Left cardiac atrium (tissue), 4 donors: ENCODE measurements at regions of chr5 and their contacts with region 1.

Region 1: GRCh38 chr5:150656191-150657132 is 4.6 kb upstream of the MYOZ3 start:
- DNase-seq: peak; percentile 76
- ATAC-seq: peak; percentile 61 to 80

Region 2: GRCh38 chr5:150398722-150399523 is 257.5 kb before region 1 on chr5:
- intact Hi-C with region 1: no loop called
- DNase-seq: no peak
- ATAC-seq: no peak

Region 3: DNA sequence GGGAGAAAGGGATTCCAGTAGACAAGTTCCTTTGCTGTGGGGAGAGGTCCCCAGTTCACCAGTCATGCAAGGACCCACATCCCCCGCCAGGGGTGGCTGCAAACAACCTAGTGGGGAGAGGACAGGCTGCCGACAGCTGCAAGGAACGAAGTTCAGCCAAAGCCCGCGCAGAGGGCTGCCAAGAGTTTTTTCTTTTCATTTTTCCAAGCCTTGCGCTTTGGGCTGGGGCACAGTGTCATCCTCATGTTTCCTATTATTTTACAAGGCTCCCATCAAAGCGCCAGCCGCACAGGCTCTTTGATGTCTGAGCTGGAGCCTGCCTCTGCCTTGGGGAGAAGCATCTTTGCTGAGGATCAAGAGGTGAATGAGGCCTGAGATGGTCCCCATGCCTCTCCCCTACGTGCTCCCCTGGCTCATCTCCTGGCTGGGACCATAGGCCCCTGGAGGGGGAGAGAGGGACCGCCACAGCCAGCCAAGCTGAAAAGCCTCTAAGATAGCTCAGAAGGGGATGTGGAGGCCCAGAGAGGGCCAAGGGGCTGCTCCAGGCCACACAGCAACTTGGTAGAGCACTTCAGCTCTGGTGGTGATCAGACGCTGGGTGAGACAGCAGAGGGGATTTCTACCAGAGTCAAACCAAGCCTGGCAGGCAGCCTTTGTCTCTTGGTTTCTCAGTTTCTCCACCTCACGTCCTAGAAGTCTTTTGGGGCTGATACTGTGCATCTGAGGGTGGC is 66.4 kb before region 1 on chr5:
- intact Hi-C with region 1: loop called in 1 of 2 experiments (anchors 2 kb)
- DNase-seq: peak; percentile 84
- ATAC-seq: peak; percentile 75 to 76